CD4-positive, alpha-beta T cell (primary cell): ENCODE measurements at regions of chr15 and their contacts with region 1.

Region 1: GRCh38 chr15:67839929-67840748 is at the start of gene RNU6-1:
- DNase-seq: peak; percentile 94 to 98 (median 96)
- ATAC-seq: peak; percentile 79
- H3K4me3 ChIP-seq: peak within 1 kb of the TSS; percentile 85
- H3K4me3 Mint-ChIP-seq: peak within 1 kb of the TSS; percentile 97
- H3K27ac ChIP-seq: peak within 1 kb of the TSS; percentile 73 to 83
- H3K27ac Mint-ChIP-seq: peak within 1 kb of the TSS; percentile 99
- H3K4me1 ChIP-seq: peaks cover 42% of the 10 kb centered on the region
- H3K4me1 Mint-ChIP-seq: peaks cover 54% of the 10 kb centered on the region
- H3K27me3 ChIP-seq: peaks cover 10 to 12% of the 10 kb centered on the region in 2 experiments
- H3K27me3 Mint-ChIP-seq: peaks cover 21% of the 10 kb centered on the region
- CTCF ChIP-seq: no peak
- total RNA-seq, gene RNU6-1: not detected

Region 2: GRCh38 chr15:66700802-66701421 is 1139.2 kb before region 1 on chr15:
- CTCF ChIA-PET with region 1: no interaction called
- POLR2A ChIA-PET with region 1: no interaction called
- intact Hi-C with region 1: loop called in 1 of 2 experiments (anchors 10 kb)
- DNase-seq: peak; percentile 64 to 91 (median 82)
- ATAC-seq: peak; percentile 76
- H3K4me3 ChIP-seq: peak overlapping the region; percentile 76
- H3K4me3 Mint-ChIP-seq: peak overlapping the region; percentile 90
- H3K27ac ChIP-seq: no peak overlapping the region
- H3K27ac Mint-ChIP-seq: peak overlapping the region; percentile 73
- H3K4me1 ChIP-seq: peaks cover 30% of the 10 kb centered on the region
- H3K4me1 Mint-ChIP-seq: peaks cover 23% of the 10 kb centered on the region
- H3K27me3 ChIP-seq: peaks cover 17 to 20% of the 10 kb centered on the region in 2 experiments
- H3K27me3 Mint-ChIP-seq: peaks cover 30% of the 10 kb centered on the region
- CTCF ChIP-seq: no peak

Region 3: DNA sequence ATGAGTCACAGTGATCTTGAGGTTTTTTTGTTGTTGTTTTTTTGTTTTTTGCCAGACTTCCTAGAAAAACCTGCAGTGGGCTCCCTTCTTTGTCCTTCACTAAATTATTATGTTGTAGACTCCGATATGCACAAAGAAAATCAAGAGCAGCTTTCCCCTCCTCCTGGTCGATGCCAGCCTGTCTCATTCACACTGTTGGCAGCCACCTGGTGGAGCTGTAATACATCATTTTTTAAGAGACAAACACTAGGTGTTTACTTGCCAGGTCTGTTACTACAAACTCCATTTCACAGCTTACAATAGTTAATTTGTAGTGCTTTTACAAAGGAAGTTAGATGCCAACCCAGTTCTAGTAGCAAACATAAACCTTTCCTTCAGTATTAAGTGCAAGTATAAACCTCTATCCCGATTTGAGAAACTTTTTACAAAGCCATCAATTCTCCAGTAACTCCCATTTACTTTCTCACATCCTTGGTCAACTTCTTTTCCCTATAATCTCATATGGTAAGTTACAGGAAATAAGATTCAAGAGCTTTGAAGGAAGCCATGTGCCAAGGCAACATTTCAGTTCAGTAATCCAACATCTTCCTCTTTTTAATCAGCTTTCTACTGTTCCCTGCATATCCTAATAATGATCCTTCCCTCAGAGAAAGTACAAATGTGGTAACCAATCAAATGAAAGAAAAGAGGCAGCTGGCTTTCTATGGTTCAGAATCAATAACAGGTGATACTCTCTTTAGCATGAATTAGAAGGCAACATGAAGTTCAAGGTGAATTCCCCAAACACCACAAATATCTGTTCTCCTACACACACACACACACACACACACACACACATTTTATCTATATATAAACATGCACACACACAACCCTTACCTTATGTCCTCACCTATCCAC is 599.7 kb before region 1 on chr15:
- CTCF ChIA-PET with region 1: no interaction called
- POLR2A ChIA-PET with region 1: no interaction called
- intact Hi-C with region 1: loop called (anchors 10 kb)
- DNase-seq: peak in 10 of 14 experiments; percentile 7 to 68 (median 26)
- ATAC-seq: peak; percentile 84
- H3K4me3 ChIP-seq: no peak overlapping the region
- H3K4me3 Mint-ChIP-seq: peak overlapping the region; percentile 16
- H3K27ac ChIP-seq: peak overlapping the region in 1 of 2 donors; percentile 63
- H3K27ac Mint-ChIP-seq: peak overlapping the region; percentile 66
- H3K4me1 ChIP-seq: peaks cover 28% of the 10 kb centered on the region
- H3K4me1 Mint-ChIP-seq: peaks cover 61% of the 10 kb centered on the region
- H3K27me3 ChIP-seq: no peaks in the 10 kb centered on the region
- H3K27me3 Mint-ChIP-seq: no peaks in the 10 kb centered on the region
- CTCF ChIP-seq: peak; percentile 52

Region 4: DNA sequence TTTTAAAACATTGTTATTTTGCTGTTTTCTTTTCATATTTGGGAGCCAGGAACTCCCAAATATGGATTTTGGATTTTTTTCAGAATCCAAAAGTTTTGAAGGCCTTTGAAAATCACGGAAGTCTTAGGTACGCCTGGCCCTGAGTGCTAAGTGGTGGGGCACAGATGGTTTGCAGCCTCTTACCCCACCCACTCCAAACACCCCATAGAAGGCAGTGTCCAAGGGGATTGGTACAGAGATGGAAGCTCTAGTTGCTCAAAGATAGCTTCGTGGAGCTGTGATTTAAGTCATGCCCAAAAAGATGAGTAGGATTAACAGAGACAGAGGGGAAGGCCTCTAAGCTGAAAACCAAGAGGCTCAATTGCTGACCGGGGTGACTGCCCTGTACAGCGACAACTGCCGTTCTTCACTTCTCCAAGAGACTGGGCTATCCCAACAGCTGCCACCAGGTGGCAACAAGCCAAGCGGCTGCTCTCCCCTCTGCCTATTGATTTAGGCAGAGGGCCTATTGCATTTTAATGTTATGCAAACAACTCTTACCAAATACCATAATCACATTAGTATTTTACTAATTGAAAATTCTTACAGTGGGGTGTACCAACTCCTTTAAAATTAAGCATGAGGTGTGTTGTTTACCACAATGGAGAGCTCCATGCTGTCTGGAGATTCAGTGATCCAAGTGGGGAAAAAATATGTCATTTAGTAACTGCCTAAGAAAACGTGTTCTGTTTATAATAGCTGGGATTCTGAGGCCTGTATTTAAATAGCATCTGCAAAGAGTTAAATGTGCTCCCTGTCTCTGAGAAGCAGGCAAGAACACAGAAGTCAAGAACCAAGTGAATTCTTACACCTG is 383.2 kb before region 1 on chr15:
- CTCF ChIA-PET with region 1: interaction called, 16 read pairs
- POLR2A ChIA-PET with region 1: interaction called, 3 read pairs
- intact Hi-C with region 1: loop called (anchors 1 kb)
- DNase-seq: peak; percentile 70 to 90 (median 81)
- ATAC-seq: peak; percentile 91
- H3K4me3 ChIP-seq: no peak overlapping the region
- H3K4me3 Mint-ChIP-seq: no peak overlapping the region
- H3K27ac ChIP-seq: no peak overlapping the region
- H3K27ac Mint-ChIP-seq: no peak overlapping the region
- H3K4me1 ChIP-seq: peaks cover 4% of the 10 kb centered on the region
- H3K4me1 Mint-ChIP-seq: no peaks in the 10 kb centered on the region
- H3K27me3 ChIP-seq: peaks cover 0 to 6% of the 10 kb centered on the region in 2 experiments
- H3K27me3 Mint-ChIP-seq: peaks cover 18% of the 10 kb centered on the region
- CTCF ChIP-seq: peak; percentile 82

Region 5: DNA sequence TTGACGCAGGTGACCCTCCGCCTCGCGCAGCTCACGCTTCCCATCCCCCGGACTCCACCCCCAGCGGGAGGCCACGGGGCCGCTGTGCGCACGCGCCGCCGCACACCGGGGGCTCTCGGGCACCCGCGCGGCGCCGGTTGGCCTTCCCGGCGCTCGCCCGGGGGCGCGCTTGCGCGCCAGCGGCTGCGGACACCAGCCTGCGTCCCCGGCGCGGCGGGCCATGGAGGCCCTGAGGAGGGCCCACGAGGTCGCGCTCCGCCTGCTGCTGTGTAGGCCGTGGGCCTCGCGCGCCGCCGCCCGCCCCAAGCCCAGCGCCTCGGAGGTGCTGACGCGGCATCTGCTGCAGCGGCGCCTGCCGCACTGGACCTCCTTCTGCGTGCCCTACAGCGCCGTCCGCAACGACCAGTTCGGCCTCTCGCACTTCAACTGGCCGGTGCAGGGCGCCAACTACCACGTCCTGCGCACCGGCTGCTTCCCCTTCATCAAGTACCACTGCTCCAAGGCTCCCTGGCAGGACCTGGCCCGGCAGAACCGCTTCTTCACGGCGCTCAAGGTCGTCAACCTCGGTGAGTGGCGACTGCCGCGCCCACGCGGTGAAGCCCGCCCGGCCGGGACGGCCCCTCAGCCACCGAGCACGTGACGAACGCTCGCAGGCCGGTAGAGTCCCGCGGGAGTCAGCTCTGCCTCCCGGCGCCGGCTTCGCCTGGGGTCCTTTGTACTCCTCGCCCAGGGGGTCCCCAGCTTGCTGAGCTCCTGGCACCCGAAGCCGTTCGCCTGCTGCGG is 318.9 kb before region 1 on chr15 and contains the start of gene C15orf61:
- CTCF ChIA-PET with region 1: interaction called, 3 read pairs
- POLR2A ChIA-PET with region 1: interaction called, 8 read pairs
- intact Hi-C with region 1: loop called (anchors 1 kb)
- DNase-seq: peak; percentile 70 to 95 (median 82)
- ATAC-seq: peak; percentile 80
- H3K4me3 ChIP-seq: peak within 1 kb of the TSS; percentile 78
- H3K4me3 Mint-ChIP-seq: peak within 1 kb of the TSS; percentile 95
- H3K27ac ChIP-seq: peak within 1 kb of the TSS; percentile 80 to 84
- H3K27ac Mint-ChIP-seq: peak within 1 kb of the TSS; percentile 91
- H3K4me1 ChIP-seq: peaks cover 13% of the 10 kb centered on the region
- H3K4me1 Mint-ChIP-seq: peaks cover 30% of the 10 kb centered on the region
- H3K27me3 ChIP-seq: no peaks in the 10 kb centered on the region
- H3K27me3 Mint-ChIP-seq: no peaks in the 10 kb centered on the region
- CTCF ChIP-seq: no peak
- total RNA-seq, gene C15orf61: 11.3 to 12.0 TPM

Region 6: DNA sequence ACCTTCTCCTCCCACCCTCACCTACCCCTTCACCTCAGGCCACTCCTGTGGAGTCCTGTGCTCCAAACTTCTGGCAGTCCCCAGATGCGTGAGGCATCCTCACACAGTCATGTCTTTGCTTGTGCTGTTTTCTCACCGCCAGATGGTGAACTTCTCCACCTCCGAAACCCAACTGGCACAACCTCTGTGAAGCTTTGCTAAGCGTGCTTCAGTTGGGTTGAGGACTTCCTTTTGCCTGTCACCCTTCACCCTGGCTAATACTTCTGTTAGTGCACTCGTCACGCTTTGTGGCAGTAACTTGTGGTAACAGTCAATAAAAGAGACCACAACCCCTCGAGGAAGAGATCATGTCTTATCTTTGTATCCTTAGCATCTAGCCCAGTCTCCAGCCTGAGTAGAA is 56.8 kb before region 1 on chr15:
- CTCF ChIA-PET with region 1: interaction called, 15 read pairs
- POLR2A ChIA-PET with region 1: interaction called, 11 read pairs
- intact Hi-C with region 1: loop called (anchors 1 kb)
- DNase-seq: peak; percentile 23 to 83 (median 43)
- ATAC-seq: peak; percentile 93
- H3K4me3 ChIP-seq: no peak overlapping the region
- H3K4me3 Mint-ChIP-seq: peak overlapping the region; percentile 44
- H3K27ac ChIP-seq: no peak overlapping the region
- H3K27ac Mint-ChIP-seq: peak overlapping the region; percentile 61
- H3K4me1 ChIP-seq: peaks cover 28% of the 10 kb centered on the region
- H3K4me1 Mint-ChIP-seq: peaks cover 45% of the 10 kb centered on the region
- H3K27me3 ChIP-seq: no peaks in the 10 kb centered on the region
- H3K27me3 Mint-ChIP-seq: no peaks in the 10 kb centered on the region
- CTCF ChIP-seq: peak; percentile 43

Region 7: DNA sequence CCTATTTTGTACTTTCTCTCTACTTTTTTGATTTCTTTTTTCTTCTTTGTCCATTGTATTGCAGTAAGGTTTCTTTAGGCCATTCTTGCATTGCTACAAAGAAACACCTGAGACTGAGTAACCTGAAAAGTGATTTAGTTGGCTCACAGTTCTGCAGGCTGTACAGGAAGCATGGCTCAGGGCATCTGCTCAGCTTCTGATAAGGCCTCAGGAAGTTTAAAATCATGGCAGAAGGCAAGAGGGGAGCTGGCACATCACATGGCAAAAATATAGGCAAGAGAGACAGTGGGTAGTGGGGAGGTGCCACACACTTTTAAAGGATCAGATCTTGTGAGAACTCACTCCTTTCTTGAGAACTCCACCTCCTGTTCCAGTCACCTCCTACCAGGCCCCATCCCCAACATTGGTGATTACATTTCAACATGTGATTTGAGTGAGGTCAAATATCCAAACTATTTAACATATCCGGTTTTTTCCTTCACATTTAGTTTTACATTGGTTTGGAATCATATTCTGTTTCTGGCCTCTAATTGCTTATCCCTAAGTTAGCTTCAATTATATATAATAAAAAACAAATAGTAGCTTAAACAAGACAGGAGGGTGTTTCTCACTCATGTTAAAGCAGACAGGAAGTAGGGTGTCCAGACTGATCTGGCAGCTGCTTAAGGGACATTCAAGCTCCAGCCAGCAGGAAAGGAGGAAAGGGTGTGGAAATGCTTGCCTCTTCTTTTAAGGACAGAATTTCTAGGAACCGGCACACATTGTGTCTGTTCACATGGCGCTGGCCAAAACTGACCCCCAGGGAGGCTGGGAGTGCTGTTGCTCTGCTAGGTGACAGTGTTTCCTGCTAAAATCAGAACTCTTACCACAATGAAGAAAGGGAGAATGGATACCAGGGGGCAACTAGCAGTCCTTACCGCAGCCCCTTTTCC is 43.7 kb before region 1 on chr15:
- CTCF ChIA-PET with region 1: no interaction called
- POLR2A ChIA-PET with region 1: no interaction called
- intact Hi-C with region 1: no loop called
- DNase-seq: no peak
- ATAC-seq: no peak
- H3K4me3 ChIP-seq: no peak overlapping the region
- H3K4me3 Mint-ChIP-seq: no peak overlapping the region
- H3K27ac ChIP-seq: no peak overlapping the region
- H3K27ac Mint-ChIP-seq: no peak overlapping the region
- H3K4me1 ChIP-seq: no peaks in the 10 kb centered on the region
- H3K4me1 Mint-ChIP-seq: no peaks in the 10 kb centered on the region
- H3K27me3 ChIP-seq: no peaks in the 10 kb centered on the region
- H3K27me3 Mint-ChIP-seq: no peaks in the 10 kb centered on the region
- CTCF ChIP-seq: no peak

Region 8: DNA sequence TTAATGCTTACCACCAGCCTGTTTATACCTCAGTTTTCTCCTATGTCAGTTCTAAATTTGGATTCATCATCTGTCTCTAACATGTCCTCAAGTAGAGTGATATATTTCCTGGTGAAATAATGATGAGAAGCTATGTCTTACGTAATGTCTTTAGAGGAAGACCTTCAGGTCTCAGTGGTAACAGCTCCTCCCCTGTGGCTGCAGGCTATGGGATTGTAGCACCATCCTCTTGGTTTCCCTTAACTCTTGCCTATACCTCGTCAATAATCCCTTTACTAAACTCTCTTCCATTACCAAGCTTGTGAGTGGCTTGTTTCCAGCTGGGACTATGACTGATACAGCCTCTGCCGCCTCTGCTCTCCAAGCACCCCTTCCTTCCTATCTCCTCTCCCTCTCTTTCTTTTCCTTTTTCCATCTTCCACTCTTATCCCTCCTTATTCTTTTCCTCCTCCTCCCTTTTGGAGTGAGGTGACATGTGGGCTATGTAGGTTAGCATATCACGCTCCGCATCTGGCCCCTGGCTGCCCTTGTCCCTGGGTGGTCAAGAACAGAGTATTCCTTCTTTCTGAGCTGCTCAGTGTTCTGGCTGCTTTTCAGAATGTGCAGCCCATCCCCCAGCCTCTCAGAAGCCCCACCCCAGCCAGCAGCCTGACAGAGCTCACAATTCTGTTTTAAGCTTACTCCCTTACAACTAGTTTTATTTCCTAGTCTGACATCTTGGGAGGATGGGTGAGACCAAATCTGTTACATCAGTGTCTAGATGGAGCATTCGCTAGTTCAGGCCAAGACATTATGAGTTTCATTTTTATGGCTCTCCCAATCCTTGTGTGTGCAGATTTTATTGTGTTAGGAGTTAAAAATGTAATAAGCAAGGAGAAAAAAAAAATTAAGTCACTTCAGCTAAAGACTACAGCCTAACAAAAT is 74.7 kb after region 1 on chr15:
- CTCF ChIA-PET with region 1: no interaction called
- POLR2A ChIA-PET with region 1: no interaction called
- intact Hi-C with region 1: no loop called
- DNase-seq: no peak
- ATAC-seq: no peak
- H3K4me3 ChIP-seq: no peak overlapping the region
- H3K4me3 Mint-ChIP-seq: no peak overlapping the region
- H3K27ac ChIP-seq: no peak overlapping the region
- H3K27ac Mint-ChIP-seq: no peak overlapping the region
- H3K4me1 ChIP-seq: no peaks in the 10 kb centered on the region
- H3K4me1 Mint-ChIP-seq: no peaks in the 10 kb centered on the region
- H3K27me3 ChIP-seq: peaks cover 0 to 3% of the 10 kb centered on the region in 2 experiments
- H3K27me3 Mint-ChIP-seq: no peaks in the 10 kb centered on the region
- CTCF ChIP-seq: no peak

Region 9: GRCh38 chr15:67998599-67999122 is 158.5 kb after region 1 on chr15:
- CTCF ChIA-PET with region 1: no interaction called
- POLR2A ChIA-PET with region 1: no interaction called
- intact Hi-C with region 1: no loop called
- DNase-seq: no peak
- ATAC-seq: no peak
- H3K4me3 ChIP-seq: no peak overlapping the region
- H3K4me3 Mint-ChIP-seq: no peak overlapping the region
- H3K27ac ChIP-seq: no peak overlapping the region
- H3K27ac Mint-ChIP-seq: no peak overlapping the region
- H3K4me1 ChIP-seq: no peaks in the 10 kb centered on the region
- H3K4me1 Mint-ChIP-seq: no peaks in the 10 kb centered on the region
- H3K27me3 ChIP-seq: no peaks in the 10 kb centered on the region
- H3K27me3 Mint-ChIP-seq: no peaks in the 10 kb centered on the region
- CTCF ChIP-seq: no peak

Region 10: GRCh38 chr15:68062946-68063465 is 222.9 kb after region 1 on chr15:
- CTCF ChIA-PET with region 1: no interaction called
- POLR2A ChIA-PET with region 1: no interaction called
- intact Hi-C with region 1: no loop called
- DNase-seq: no peak
- ATAC-seq: no peak
- H3K4me3 ChIP-seq: no peak overlapping the region
- H3K4me3 Mint-ChIP-seq: no peak overlapping the region
- H3K27ac ChIP-seq: no peak overlapping the region
- H3K27ac Mint-ChIP-seq: no peak overlapping the region
- H3K4me1 ChIP-seq: peaks cover 32% of the 10 kb centered on the region
- H3K4me1 Mint-ChIP-seq: peaks cover 76% of the 10 kb centered on the region
- H3K27me3 ChIP-seq: no peaks in the 10 kb centered on the region
- H3K27me3 Mint-ChIP-seq: no peaks in the 10 kb centered on the region
- CTCF ChIP-seq: no peak